Pancreas (tissue), 10 donors: ENCODE measurements at regions of chr19 and their contacts with region 1.

Region 1: DNA sequence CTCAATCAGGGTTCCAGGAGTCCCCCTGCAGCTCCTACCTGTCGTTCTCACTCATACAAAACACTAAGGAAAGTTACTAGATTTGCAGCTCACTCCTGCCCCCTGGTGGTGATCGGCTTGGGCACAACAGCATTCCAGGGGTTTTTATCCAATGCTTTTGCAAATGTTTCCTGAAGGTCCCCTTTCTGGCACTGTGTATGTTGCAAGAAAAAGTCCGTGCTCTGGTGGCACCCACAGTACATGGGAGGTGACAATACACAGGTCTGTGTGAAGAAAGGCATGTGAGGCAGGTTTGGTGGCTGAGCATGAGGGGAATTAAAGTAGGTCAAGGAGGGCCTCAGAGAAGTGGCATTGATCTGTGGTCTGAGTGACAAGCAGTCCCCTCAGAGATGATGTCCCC is 8.6 kb upstream of the TYK2 start:
- DNase-seq: peak; percentile 72 to 98 (median 88)
- ATAC-seq: peak; percentile 67 to 87 (median 84)
- H3K4me3 ChIP-seq: no peak overlapping the region
- H3K27ac ChIP-seq: no peak overlapping the region
- H3K4me1 ChIP-seq: no peaks in the 10 kb centered on the region
- H3K27me3 ChIP-seq: no peaks in the 10 kb centered on the region
- CTCF ChIP-seq: peak; percentile 84 to 92 (median 90)

Region 2: GRCh38 chr19:10269333-10270179 is 119.4 kb before region 1 on chr19:
- intact Hi-C with region 1: loop called (anchors 2 to 10 kb)
- DNase-seq: peak; percentile 66 to 95 (median 81)
- ATAC-seq: peak; percentile 82 to 87 (median 85)
- H3K4me3 ChIP-seq: peak overlapping the region in 3 of 4 donors; percentile 14 to 52 (median 33)
- H3K27ac ChIP-seq: peak overlapping the region in 3 of 4 donors; percentile 31 to 86 (median 83)
- H3K4me1 ChIP-seq: peaks cover 0 to 10% (median 6%) of the 10 kb centered on the region in 3 donors
- H3K27me3 ChIP-seq: no peaks in the 10 kb centered on the region
- CTCF ChIP-seq: peak; percentile 75 to 91 (median 82)

Region 3: GRCh38 chr19:10439588-10439987 is 50.6 kb after region 1 on chr19:
- intact Hi-C with region 1: no loop called
- DNase-seq: no peak
- ATAC-seq: no peak
- H3K4me3 ChIP-seq: no peak overlapping the region
- H3K27ac ChIP-seq: no peak overlapping the region
- H3K4me1 ChIP-seq: no peaks in the 10 kb centered on the region
- H3K27me3 ChIP-seq: no peaks in the 10 kb centered on the region
- CTCF ChIP-seq: no peak